ENCODE measurements at regions of chr9 and their contacts with region 1.

Region 1: GRCh38 chr9:36560857-36561221 is 11.9 kb upstream of the MELK start:
- DNase-seq: no peak
- ATAC-seq: no peak
- H3K4me3 ChIP-seq: no peak overlapping the region
- H3K27ac ChIP-seq: no peak overlapping the region
- H3K4me1 ChIP-seq: peaks cover 0 to under 1% of the 10 kb centered on the region in 2 experiments; a peak in 1 of 4 replicates
- H3K27me3 ChIP-seq: no peaks in the 10 kb centered on the region
- CTCF ChIP-seq: no peak
- POLR2A ChIP-seq: no peak
- RAD21 ChIP-seq: no peak

Region 2: DNA sequence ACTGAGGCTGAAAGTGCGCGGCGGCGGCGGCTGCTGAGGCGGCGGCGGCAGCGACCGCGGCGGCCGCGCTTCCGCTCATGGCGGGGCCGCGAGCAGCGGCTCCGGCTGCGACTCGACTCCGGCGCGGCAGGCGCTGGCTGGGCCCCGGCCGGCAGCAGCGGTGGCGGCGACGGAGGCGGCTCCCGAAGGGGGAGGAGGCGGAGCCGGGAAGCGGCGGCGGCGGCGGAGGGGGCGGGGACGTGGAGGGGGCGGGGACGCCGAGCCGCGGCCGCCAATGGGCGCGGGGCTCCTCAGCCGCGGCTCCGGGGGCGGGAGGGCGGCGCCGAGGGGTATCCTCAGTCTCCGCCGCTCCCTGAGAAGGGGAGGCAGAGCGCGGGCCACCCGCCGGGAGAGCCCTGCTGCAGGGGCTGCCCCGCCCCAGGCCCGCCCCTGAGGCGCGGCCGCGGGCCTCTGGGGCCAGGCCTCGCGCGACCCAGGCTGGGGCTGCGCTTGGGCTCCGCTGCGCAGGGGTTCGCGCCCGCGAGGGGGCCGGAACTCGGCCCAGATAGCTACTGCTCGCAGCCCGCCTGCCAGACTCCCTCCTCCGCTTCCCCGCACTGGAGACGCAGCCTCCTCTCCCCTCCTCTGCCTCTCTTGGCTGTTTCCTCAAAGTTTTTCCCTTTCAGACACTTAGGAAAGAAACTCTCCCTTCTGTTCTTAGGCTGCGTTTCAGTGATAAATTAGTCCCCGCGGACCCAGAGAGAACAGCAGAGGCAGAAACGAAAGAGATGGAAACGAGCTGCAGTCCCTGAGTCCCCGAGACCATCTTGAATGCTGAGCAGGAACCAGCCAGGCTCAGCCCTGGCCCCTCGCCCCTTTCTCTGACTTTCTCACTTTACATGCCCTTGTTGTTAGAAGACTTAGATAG is 73.1 kb before region 1 on chr9:
- CTCF ChIA-PET with region 1: no interaction called
- POLR2A ChIA-PET with region 1: no interaction called
- RAD21 ChIA-PET with region 1: no interaction called
- intact Hi-C with region 1: loop called (anchors 5 kb)
- DNase-seq: peak; percentile 73
- ATAC-seq: peak; percentile 96
- H3K4me3 ChIP-seq: peak overlapping the region; percentile 63 to 81
- H3K27ac ChIP-seq: peak overlapping the region; percentile 59
- H3K4me1 ChIP-seq: peaks cover 11 to 24% of the 10 kb centered on the region in 2 experiments; a peak in 3 of 4 replicates
- H3K27me3 ChIP-seq: no peaks in the 10 kb centered on the region
- CTCF ChIP-seq: no peak
- POLR2A ChIP-seq: peak; percentile 82
- RAD21 ChIP-seq: no peak

Measured in HCT116 (cell line).